T-cell (primary cell): ENCODE measurements at regions of chr9 and their contacts with region 1.

Region 1: GRCh38 chr9:129755146-129755545 is 2.3 kb upstream of the PTGES start:
- DNase-seq: no peak
- ATAC-seq: no peak
- H3K4me3 ChIP-seq: no peak overlapping the region
- H3K4me3 Mint-ChIP-seq: no peak overlapping the region
- H3K27ac ChIP-seq: no peak overlapping the region
- H3K27ac Mint-ChIP-seq: no peak overlapping the region
- H3K4me1 ChIP-seq: peaks cover 0 to 20% of the 10 kb centered on the region in 2 experiments
- H3K4me1 Mint-ChIP-seq: peaks cover 19 to 30% (median 27%) of the 10 kb centered on the region in 3 donors
- H3K27me3 ChIP-seq: peaks cover 0 to 42% of the 10 kb centered on the region in 2 experiments
- H3K27me3 Mint-ChIP-seq: peaks cover 0 to 14% of the 10 kb centered on the region in 2 donors

Region 2: GRCh38 chr9:129560881-129561306 is 194.3 kb before region 1 on chr9:
- CTCF ChIA-PET with region 1: no interaction called
- POLR2A ChIA-PET with region 1: interaction called in 1 of 2 experiments, 16 read pairs
- DNase-seq: no peak
- ATAC-seq: no peak
- H3K4me3 ChIP-seq: no peak overlapping the region
- H3K4me3 Mint-ChIP-seq: no peak overlapping the region
- H3K27ac ChIP-seq: no peak overlapping the region
- H3K27ac Mint-ChIP-seq: no peak overlapping the region
- H3K4me1 ChIP-seq: no peaks in the 10 kb centered on the region
- H3K4me1 Mint-ChIP-seq: peaks cover 0 to 2% (median 0%) of the 10 kb centered on the region in 3 donors
- H3K27me3 ChIP-seq: peaks cover 0 to 18% of the 10 kb centered on the region in 2 experiments
- H3K27me3 Mint-ChIP-seq: peaks cover 0 to 3% of the 10 kb centered on the region in 2 donors